ENCODE measurements at regions of chr6 and their contacts with region 1.

Region 1: DNA sequence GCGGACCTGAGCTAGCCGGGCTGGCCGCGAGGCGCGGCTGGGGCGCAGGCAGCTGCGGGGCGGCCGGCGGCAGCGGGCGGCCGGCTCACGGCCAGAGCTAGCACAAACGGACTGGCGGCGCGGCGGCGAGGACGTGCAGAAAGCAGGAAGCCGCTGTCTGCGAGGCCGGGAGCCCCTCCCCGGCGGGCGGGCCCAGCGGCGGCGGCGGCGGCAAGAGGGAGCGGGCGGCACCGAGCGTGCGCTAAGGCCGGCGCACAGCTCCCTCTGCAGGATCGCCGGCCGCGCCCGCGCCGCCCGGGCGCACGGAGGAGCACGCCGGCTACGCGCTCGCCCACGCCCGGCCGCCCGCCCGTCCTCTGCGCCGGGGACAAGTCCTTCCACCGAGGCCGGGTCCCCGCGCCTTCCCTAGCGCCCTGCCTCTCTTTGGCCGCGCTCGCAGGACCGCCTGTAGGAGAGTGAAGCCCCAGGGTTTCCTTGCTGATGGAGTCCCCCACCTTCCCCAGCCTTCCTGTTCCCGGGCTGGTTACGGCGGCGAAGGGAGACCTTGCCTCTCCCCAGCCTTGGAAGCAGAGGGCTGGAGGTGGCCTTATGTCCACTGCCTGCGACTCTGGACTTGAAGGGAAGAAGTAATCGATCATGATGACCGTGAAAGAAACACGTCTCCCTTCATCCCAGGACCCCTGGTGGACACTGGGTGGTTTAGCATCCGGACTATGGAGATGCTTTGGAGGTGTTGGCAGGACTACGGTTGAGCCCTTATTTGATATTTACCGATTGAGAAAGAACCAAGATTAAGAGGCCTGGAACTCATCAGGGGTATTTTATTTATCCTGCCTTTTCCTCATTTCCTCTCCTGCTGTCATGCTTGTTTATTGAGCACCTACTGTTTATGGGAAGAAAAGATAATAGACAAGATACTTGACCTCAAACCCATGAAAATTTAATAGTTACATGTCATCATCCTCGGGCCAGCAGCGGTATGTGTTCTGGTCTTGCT is at the start of gene PREP:
- DNase-seq: peak; percentile 62 to 90 (median 80)
- ATAC-seq: peak; percentile 94
- H3K4me3 ChIP-seq: peak within 1 kb of the TSS; percentile 90 to 95
- H3K4me3 Mint-ChIP-seq: peak within 1 kb of the TSS; percentile 90
- H3K27ac ChIP-seq: peak within 1 kb of the TSS; percentile 58 to 61
- H3K27ac Mint-ChIP-seq: peak within 1 kb of the TSS; percentile 73
- H3K4me1 ChIP-seq: peaks cover 46% of the 10 kb centered on the region
- H3K4me1 Mint-ChIP-seq: peaks cover 50% of the 10 kb centered on the region
- H3K27me3 ChIP-seq: no peaks in the 10 kb centered on the region
- H3K27me3 Mint-ChIP-seq: peaks cover 12% of the 10 kb centered on the region
- CTCF ChIP-seq: peak; percentile 83
- total RNA-seq, gene PREP: 15.7 to 17.6 TPM

Region 2: DNA sequence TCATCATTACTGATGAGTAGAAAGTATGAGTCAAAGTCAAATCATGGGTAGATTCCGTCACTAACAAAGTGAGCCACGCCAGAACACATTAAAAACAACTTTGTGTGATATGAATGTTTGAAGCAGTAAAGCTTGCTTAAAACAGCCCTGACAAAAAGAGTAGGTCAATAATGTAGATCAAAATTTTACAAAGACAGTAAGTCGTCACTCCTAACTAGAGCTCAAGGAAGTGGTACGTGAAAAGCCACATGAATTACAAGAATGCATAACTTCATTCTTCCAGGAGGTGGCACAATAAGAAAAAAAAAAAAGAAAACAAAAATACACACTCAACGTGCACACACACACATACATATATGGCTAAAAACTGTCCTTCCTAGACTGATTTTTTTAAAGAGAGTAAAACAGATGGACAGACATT is 613.5 kb before region 1 on chr6:
- CTCF ChIA-PET with region 1: no interaction called
- POLR2A ChIA-PET with region 1: no interaction called
- intact Hi-C with region 1: loop called in 1 of 2 experiments (anchors 10 kb)
- DNase-seq: peak in 3 of 9 experiments; percentile 19 to 70 (median 48)
- ATAC-seq: peak; percentile 95
- H3K4me3 ChIP-seq: no peak overlapping the region
- H3K4me3 Mint-ChIP-seq: peak overlapping the region; percentile 30
- H3K27ac ChIP-seq: no peak overlapping the region
- H3K27ac Mint-ChIP-seq: peak overlapping the region; percentile 64
- H3K4me1 ChIP-seq: peaks cover 13% of the 10 kb centered on the region
- H3K4me1 Mint-ChIP-seq: peaks cover 16% of the 10 kb centered on the region
- H3K27me3 ChIP-seq: no peaks in the 10 kb centered on the region
- H3K27me3 Mint-ChIP-seq: no peaks in the 10 kb centered on the region
- CTCF ChIP-seq: peak; percentile 61

Region 3: DNA sequence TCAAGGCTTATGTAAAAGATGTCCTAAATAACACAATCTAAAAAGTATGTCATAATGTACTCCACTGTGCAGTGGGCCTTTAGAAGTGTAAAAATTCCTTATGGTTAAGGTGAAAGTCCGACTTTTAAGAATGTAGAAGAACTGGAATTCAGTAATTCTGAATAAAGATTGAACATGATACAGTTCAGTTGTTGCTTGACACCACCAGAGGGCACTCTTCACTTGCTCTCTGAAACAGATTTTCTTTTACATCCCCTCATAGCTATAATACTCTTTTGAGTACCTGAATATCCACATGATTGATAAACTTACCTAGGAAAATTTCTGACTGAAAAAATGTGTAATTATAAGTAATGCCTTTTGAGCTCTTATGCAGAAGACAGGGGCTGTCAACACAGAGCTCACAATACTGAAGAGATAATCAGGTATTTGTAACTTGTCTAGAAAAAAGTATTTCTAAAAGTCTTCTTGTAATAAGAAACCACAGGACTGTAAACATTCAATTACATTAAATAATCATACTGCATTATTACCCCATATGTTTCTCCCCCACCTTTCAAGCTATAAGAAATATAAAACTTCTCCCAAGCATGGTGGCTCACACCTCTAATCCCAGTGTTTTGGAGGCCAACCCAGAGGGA is 315.5 kb before region 1 on chr6:
- CTCF ChIA-PET with region 1: interaction called, 7 read pairs
- POLR2A ChIA-PET with region 1: no interaction called
- intact Hi-C with region 1: loop called (anchors 1 to 5 kb)
- DNase-seq: peak in 5 of 9 experiments; percentile 10 to 74 (median 32)
- ATAC-seq: no peak
- H3K4me3 ChIP-seq: no peak overlapping the region
- H3K4me3 Mint-ChIP-seq: no peak overlapping the region
- H3K27ac ChIP-seq: no peak overlapping the region
- H3K27ac Mint-ChIP-seq: no peak overlapping the region
- H3K4me1 ChIP-seq: no peaks in the 10 kb centered on the region
- H3K4me1 Mint-ChIP-seq: no peaks in the 10 kb centered on the region
- H3K27me3 ChIP-seq: no peaks in the 10 kb centered on the region
- H3K27me3 Mint-ChIP-seq: peaks cover 4% of the 10 kb centered on the region
- CTCF ChIP-seq: peak; percentile 82

Region 4: GRCh38 chr6:106519460-106520394 is 1116.5 kb after region 1 on chr6:
- CTCF ChIA-PET with region 1: no interaction called
- POLR2A ChIA-PET with region 1: no interaction called
- intact Hi-C with region 1: loop called in 1 of 2 experiments (anchors 10 kb)
- DNase-seq: peak; percentile 41 to 93 (median 77)
- ATAC-seq: peak; percentile 50
- H3K4me3 ChIP-seq: peak overlapping the region; percentile 48 to 51
- H3K4me3 Mint-ChIP-seq: peak overlapping the region; percentile 91
- H3K27ac ChIP-seq: peak overlapping the region; percentile 79 to 82
- H3K27ac Mint-ChIP-seq: peak overlapping the region; percentile 96
- H3K4me1 ChIP-seq: peaks cover 48% of the 10 kb centered on the region
- H3K4me1 Mint-ChIP-seq: peaks cover 76% of the 10 kb centered on the region
- H3K27me3 ChIP-seq: no peaks in the 10 kb centered on the region
- H3K27me3 Mint-ChIP-seq: no peaks in the 10 kb centered on the region
- CTCF ChIP-seq: no peak

Region 5: GRCh38 chr6:107026965-107027364 is 1623.7 kb after region 1 on chr6:
- CTCF ChIA-PET with region 1: no interaction called
- POLR2A ChIA-PET with region 1: no interaction called
- intact Hi-C with region 1: loop called in 1 of 2 experiments (anchors 5 kb)
- DNase-seq: no peak
- ATAC-seq: no peak
- H3K4me3 ChIP-seq: no peak overlapping the region
- H3K4me3 Mint-ChIP-seq: peak overlapping the region; percentile 96
- H3K27ac ChIP-seq: no peak overlapping the region
- H3K27ac Mint-ChIP-seq: peak overlapping the region; percentile 38
- H3K4me1 ChIP-seq: peaks cover 10% of the 10 kb centered on the region
- H3K4me1 Mint-ChIP-seq: peaks cover 28% of the 10 kb centered on the region
- H3K27me3 ChIP-seq: no peaks in the 10 kb centered on the region
- H3K27me3 Mint-ChIP-seq: no peaks in the 10 kb centered on the region
- CTCF ChIP-seq: no peak